Calu3 (cell line): ENCODE measurements at regions of chr6 and their contacts with region 1.

Region 1: GRCh38 chr6:33585403-33586107 is 5.5 kb upstream of the BAK1 start:
- DNase-seq: peak; percentile 95
- H3K4me3 Mint-ChIP-seq: no peak overlapping the region
- H3K27ac Mint-ChIP-seq: no peak overlapping the region
- H3K4me1 Mint-ChIP-seq: peaks cover 24% of the 10 kb centered on the region
- H3K27me3 Mint-ChIP-seq: no peaks in the 10 kb centered on the region
- CTCF ChIP-seq: peak; percentile 99

Region 2: DNA sequence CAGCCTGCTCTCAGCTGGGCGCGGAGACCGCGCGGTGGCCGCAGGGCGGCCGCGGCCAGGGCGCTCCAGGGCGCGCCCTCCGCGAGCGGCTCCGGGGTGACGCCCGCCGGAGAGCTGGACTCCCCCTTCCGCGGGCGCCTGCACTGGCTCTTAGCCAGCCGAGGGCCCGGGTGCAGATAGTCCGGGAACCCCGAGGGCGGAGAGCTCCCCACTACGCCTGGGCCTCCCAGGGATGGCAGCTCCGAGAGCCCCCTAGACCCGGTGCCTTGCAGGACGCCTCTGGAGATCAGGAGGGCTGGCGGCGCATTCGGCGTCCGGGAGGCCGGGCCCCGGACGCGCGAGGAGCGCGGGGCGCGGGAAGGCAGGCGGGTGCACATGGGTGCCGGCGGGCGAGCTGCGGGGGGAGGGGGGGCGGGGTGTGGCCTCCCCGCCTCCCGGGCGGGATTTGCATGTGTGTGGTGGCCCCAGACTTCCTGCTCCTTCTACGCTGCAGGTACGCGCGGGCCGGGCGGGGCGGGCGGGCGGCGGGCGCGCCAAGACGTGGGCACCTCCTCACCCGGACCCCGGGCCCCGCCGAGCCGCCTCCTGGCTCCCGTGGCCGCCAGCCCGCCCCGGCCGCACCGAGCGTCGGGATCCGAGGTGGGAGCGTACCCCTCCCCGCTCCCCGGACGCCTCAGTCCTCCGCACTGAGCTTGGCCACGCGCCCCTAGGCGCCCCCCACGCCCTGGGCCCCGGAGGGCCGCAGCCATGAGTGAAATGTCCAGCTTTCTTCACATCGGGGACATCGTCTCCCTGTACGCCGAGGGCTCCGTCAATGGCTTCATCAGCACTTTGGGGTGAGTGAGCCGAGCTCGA is 35.5 kb after region 1 on chr6 and contains the start of gene ITPR3:
- CTCF ChIA-PET with region 1: interaction called, 26 read pairs
- intact Hi-C with region 1: no loop called
- DNase-seq: peak; percentile 83
- H3K4me3 Mint-ChIP-seq: peak within 1 kb of the TSS; percentile 89
- H3K27ac Mint-ChIP-seq: peak within 1 kb of the TSS; percentile 72
- H3K4me1 Mint-ChIP-seq: peaks cover 54% of the 10 kb centered on the region
- H3K27me3 Mint-ChIP-seq: no peaks in the 10 kb centered on the region
- CTCF ChIP-seq: no peak
- total RNA-seq, gene ITPR3: 136 and 143 TPM in 2 replicates

Region 3: DNA sequence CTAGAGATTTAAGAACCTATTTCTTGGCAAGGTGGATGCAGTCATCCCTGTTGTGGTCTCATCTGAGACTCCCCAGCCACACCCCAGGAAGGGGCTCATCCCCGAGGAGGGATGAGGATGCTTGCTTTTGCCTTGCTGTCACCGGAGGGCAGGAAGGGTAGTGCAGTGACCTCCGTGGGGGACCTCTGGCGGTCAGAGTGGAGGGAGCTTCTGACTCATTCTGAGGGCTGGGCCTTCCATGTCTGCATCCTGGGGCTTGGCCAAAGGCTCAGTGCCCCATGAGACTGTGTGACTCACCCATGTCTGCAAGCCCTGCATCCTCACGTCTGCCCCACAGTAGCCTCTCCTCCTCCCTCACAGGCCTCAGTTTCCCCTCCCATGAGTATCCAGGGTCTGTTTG is 87.3 kb after region 1 on chr6:
- CTCF ChIA-PET with region 1: interaction called, 34 read pairs
- intact Hi-C with region 1: loop called (anchors 1 kb)
- DNase-seq: peak; percentile 94
- H3K4me3 Mint-ChIP-seq: no peak overlapping the region
- H3K27ac Mint-ChIP-seq: peak overlapping the region; percentile 55
- H3K4me1 Mint-ChIP-seq: peaks cover 57% of the 10 kb centered on the region
- H3K27me3 Mint-ChIP-seq: no peaks in the 10 kb centered on the region
- CTCF ChIP-seq: peak; percentile 85

Region 4: GRCh38 chr6:33711140-33712129 is 125.9 kb after region 1 on chr6 and contains the start of gene UQCC2:
- CTCF ChIA-PET with region 1: interaction called, 13 read pairs
- intact Hi-C with region 1: no loop called
- DNase-seq: peak; percentile 100
- H3K4me3 Mint-ChIP-seq: peak within 1 kb of the TSS; percentile 96
- H3K27ac Mint-ChIP-seq: peak within 1 kb of the TSS; percentile 97
- H3K4me1 Mint-ChIP-seq: peaks cover 51% of the 10 kb centered on the region
- H3K27me3 Mint-ChIP-seq: no peaks in the 10 kb centered on the region
- CTCF ChIP-seq: peak; percentile 94
- total RNA-seq, gene UQCC2: 142 and 145 TPM in 2 replicates

Region 5: DNA sequence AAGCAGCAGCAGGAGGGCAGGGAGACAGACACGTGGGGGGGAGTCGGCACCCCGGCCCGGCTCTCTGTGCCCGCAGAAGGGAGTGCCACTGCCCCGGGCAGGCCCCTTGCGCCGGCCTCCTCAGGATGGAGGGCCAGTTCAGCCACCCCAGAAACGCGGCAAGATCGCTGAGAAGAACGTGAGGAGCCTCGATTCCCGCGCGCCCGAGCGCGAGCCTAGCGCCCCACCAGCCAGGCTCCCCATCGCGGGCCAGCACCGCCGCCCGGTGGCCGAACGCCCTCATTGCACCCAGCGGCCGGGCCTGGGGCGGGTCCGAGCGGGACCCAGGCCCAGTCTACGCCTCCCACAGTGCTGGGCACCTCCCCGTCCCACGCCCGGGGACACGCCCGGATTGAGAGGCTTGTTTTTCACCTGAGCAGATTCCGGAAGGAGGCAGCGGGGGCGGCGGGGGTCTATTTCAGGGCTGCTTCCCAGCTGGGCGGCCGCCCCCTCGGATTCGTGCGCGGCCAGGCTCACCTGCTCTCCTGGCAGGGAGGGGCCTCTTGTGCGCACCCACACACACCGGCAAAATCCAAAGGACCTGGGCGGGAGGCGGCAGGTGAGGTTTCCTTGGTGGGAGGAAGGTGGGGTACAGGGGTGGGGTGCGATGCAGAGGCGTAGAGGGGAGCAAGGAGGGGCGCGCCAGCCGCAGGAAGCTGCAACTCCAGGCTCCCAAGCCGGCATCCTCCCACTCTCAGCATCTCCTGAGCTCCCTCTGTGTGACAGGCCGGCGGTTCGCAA is 569.3 kb after region 1 on chr6:
- CTCF ChIA-PET with region 1: no interaction called
- intact Hi-C with region 1: loop called (anchors 5 kb)
- DNase-seq: peak; percentile 91
- H3K4me3 Mint-ChIP-seq: peak overlapping the region; percentile 60
- H3K27ac Mint-ChIP-seq: no peak overlapping the region
- H3K4me1 Mint-ChIP-seq: peaks cover 9% of the 10 kb centered on the region
- H3K27me3 Mint-ChIP-seq: peaks cover 94% of the 10 kb centered on the region
- CTCF ChIP-seq: peak; percentile 100

Region 6: GRCh38 chr6:34447910-34448309 is 862.4 kb after region 1 on chr6:
- CTCF ChIA-PET with region 1: no interaction called
- intact Hi-C with region 1: no loop called
- DNase-seq: no peak
- H3K4me3 Mint-ChIP-seq: no peak overlapping the region
- H3K27ac Mint-ChIP-seq: no peak overlapping the region
- H3K4me1 Mint-ChIP-seq: no peaks in the 10 kb centered on the region
- H3K27me3 Mint-ChIP-seq: peaks cover 12% of the 10 kb centered on the region
- CTCF ChIP-seq: no peak